ENCODE measurements at regions of chr4 and their contacts with region 1.

Region 1: GRCh38 chr4:153722036-153722435 is 37.8 kb downstream of the RNF175 start:
- DNase-seq: no peak
- H3K4me3 ChIP-seq: no peak overlapping the region
- H3K4me3 Mint-ChIP-seq: no peak overlapping the region
- H3K27ac Mint-ChIP-seq: no peak overlapping the region
- H3K4me1 ChIP-seq: no peaks in the 10 kb centered on the region
- H3K4me1 Mint-ChIP-seq: no peaks in the 10 kb centered on the region
- H3K27me3 ChIP-seq: no peaks in the 10 kb centered on the region
- H3K27me3 Mint-ChIP-seq: peaks cover 7% of the 10 kb centered on the region
- CTCF ChIP-seq: no peak

Region 2: DNA sequence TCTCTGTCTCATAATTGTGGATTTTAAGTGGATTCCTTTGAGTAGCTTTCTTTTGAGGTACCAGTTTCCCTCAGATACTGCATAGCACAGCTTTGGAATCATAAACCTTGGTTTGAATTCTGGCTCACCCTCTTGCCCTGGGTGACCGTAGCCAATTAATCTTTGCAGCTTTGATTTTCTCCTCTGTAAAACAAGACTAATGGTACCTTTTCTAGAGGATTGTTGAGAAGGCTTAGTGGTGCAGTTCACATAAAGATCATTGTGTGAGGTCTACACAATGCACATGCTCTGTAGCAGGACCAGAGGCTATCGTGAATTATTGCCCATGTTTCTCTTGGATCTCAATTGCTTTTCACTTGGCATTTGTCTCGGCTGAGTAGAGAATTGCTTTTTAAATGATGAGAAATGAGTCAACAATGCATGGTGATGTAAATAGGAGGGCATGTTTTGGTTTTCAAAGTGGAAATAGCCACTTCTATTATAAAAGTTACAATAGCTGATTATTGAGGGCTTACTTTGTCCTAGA is 208.0 kb before region 1 on chr4:
- CTCF ChIA-PET with region 1: no interaction called
- POLR2A ChIA-PET with region 1: no interaction called
- intact Hi-C with region 1: no loop called
- DNase-seq: no peak
- H3K4me3 ChIP-seq: no peak overlapping the region
- H3K4me3 Mint-ChIP-seq: no peak overlapping the region
- H3K27ac Mint-ChIP-seq: peak overlapping the region; percentile 56
- H3K4me1 ChIP-seq: peaks cover 73% of the 10 kb centered on the region
- H3K4me1 Mint-ChIP-seq: peaks cover 34% of the 10 kb centered on the region
- H3K27me3 ChIP-seq: no peaks in the 10 kb centered on the region
- H3K27me3 Mint-ChIP-seq: no peaks in the 10 kb centered on the region
- CTCF ChIP-seq: no peak

Region 3: GRCh38 chr4:153661211-153661822 is 60.7 kb before region 1 on chr4:
- CTCF ChIA-PET with region 1: no interaction called
- POLR2A ChIA-PET with region 1: no interaction called
- intact Hi-C with region 1: loop called (anchors 2 kb)
- DNase-seq: no peak
- H3K4me3 ChIP-seq: no peak overlapping the region
- H3K4me3 Mint-ChIP-seq: no peak overlapping the region
- H3K27ac Mint-ChIP-seq: no peak overlapping the region
- H3K4me1 ChIP-seq: peaks cover 7% of the 10 kb centered on the region
- H3K4me1 Mint-ChIP-seq: no peaks in the 10 kb centered on the region
- H3K27me3 ChIP-seq: no peaks in the 10 kb centered on the region
- H3K27me3 Mint-ChIP-seq: peaks cover 3% of the 10 kb centered on the region
- CTCF ChIP-seq: no peak

Measured in Caco-2 (cell line).